CD14-positive monocyte (primary cell): ENCODE measurements at regions of chr13 and their contacts with region 1.

Region 1: GRCh38 chr13:50911937-50912795 is 2.6 kb downstream of the RNASEH2B start:
- DNase-seq: peak; percentile 62 to 80 (median 73)
- H3K4me3 ChIP-seq: peak overlapping the region in 1 of 3 experiments; percentile 92
- H3K4me3 Mint-ChIP-seq: peak overlapping the region; percentile 56 to 72
- H3K27ac ChIP-seq: peak overlapping the region in 1 of 2 donors; percentile 98
- H3K27ac Mint-ChIP-seq: peak overlapping the region; percentile 4 to 89 (median 67)
- H3K4me1 ChIP-seq: peaks cover 53 to 72% of the 10 kb centered on the region in 2 donors
- H3K4me1 Mint-ChIP-seq: peaks cover 58% of the 10 kb centered on the region
- H3K27me3 ChIP-seq: no peaks in the 10 kb centered on the region
- H3K27me3 Mint-ChIP-seq: no peaks in the 10 kb centered on the region
- CTCF ChIP-seq: peak; percentile 88

Region 2: GRCh38 chr13:49976314-49977258 is 935.6 kb before region 1 on chr13:
- intact Hi-C with region 1: loop called in 1 of 2 experiments (anchors 5 kb)
- DNase-seq: peak; percentile 54 to 74 (median 71)
- H3K4me3 ChIP-seq: no peak overlapping the region
- H3K4me3 Mint-ChIP-seq: no peak overlapping the region
- H3K27ac ChIP-seq: no peak overlapping the region
- H3K27ac Mint-ChIP-seq: peak overlapping the region in 1 of 7 donors; percentile 38
- H3K4me1 ChIP-seq: no peaks in the 10 kb centered on the region
- H3K4me1 Mint-ChIP-seq: peaks cover 11% of the 10 kb centered on the region
- H3K27me3 ChIP-seq: no peaks in the 10 kb centered on the region
- H3K27me3 Mint-ChIP-seq: peaks cover 0 to 2% (median 0%) of the 10 kb centered on the region in 3 donors
- CTCF ChIP-seq: peak; percentile 94

Region 3: GRCh38 chr13:50081679-50082425 is 830.3 kb before region 1 on chr13:
- intact Hi-C with region 1: loop called (anchors 5 to 10 kb)
- DNase-seq: peak; percentile 97 to 99 (median 97)
- H3K4me3 ChIP-seq: peak overlapping the region; percentile 79 to 94 (median 91)
- H3K4me3 Mint-ChIP-seq: peak overlapping the region; percentile 99 to 100
- H3K27ac ChIP-seq: peak overlapping the region; percentile 80 to 85
- H3K27ac Mint-ChIP-seq: peak overlapping the region; percentile 90 to 98 (median 95)
- H3K4me1 ChIP-seq: peaks cover 49 to 74% of the 10 kb centered on the region in 2 donors
- H3K4me1 Mint-ChIP-seq: peaks cover 50% of the 10 kb centered on the region
- H3K27me3 ChIP-seq: no peaks in the 10 kb centered on the region
- H3K27me3 Mint-ChIP-seq: no peaks in the 10 kb centered on the region
- CTCF ChIP-seq: no peak

Region 4: DNA sequence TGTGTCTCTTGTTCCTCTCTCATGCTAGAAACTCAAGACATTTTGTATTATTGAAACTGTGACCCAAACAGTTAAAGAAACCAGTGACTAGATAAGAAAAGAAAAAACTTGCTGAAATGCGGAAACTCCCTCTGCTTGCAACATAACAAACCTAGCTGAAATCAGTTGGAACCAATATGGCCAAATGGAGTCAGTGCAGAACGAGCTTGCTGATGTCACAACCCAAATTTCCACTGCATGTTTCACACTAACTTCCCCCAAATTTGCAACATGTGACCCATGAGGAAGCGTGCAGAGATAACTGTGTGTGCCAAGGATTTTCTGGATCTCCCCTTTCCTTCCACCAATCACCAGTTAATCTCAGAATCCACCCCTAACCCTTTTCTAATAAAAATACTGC is 276.7 kb before region 1 on chr13:
- intact Hi-C with region 1: loop called in 1 of 2 experiments (anchors 10 kb)
- DNase-seq: peak; percentile 98 to 100 (median 99)
- H3K4me3 ChIP-seq: no peak overlapping the region
- H3K4me3 Mint-ChIP-seq: peak overlapping the region in 1 of 2 donors; percentile 46
- H3K27ac ChIP-seq: peak overlapping the region; percentile 100
- H3K27ac Mint-ChIP-seq: peak overlapping the region; percentile 95 to 100 (median 99)
- H3K4me1 ChIP-seq: peaks cover 48 to 60% of the 10 kb centered on the region in 2 donors
- H3K4me1 Mint-ChIP-seq: peaks cover 49% of the 10 kb centered on the region
- H3K27me3 ChIP-seq: no peaks in the 10 kb centered on the region
- H3K27me3 Mint-ChIP-seq: no peaks in the 10 kb centered on the region
- CTCF ChIP-seq: no peak

Region 5: DNA sequence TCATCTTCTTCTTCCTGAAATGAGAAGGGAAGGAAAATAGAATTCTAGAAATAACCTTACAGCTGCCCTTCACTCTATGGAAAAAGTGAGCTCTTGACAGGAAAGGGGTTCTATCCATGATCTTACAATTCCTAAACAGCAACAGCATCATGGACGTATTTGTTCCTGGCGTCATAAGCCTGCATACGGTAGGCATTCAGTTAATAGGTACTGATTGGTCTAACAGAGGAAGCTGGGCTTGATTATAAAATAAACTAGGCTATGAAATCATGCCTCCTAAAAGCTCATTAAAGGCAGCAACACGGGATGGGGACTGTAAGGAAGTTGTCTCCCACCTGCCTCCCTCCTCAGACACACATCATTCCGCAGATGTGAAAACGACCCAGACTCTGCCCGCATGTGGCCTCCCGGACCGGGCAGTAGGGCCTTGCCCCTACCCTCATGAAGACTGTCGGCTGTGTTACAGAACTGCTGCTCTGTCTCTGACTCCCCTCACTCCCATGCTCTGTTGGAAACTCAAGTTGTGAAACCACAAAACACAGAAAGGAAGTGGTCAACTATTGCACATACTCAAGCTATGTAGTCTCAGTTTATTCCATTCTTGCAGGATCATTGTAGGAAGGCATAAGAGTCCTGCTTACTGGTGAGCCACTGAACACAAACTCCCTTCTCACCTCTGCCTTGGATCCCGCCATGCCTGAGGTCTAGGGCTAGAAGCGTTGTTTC is 198.5 kb before region 1 on chr13:
- intact Hi-C with region 1: loop called in 1 of 2 experiments (anchors 10 kb)
- DNase-seq: peak; percentile 86 to 95 (median 93)
- H3K4me3 ChIP-seq: peak overlapping the region; percentile 34 to 80 (median 77)
- H3K4me3 Mint-ChIP-seq: peak overlapping the region; percentile 82 to 89
- H3K27ac ChIP-seq: peak overlapping the region; percentile 79 to 91
- H3K27ac Mint-ChIP-seq: peak overlapping the region; percentile 94 to 99 (median 98)
- H3K4me1 ChIP-seq: peaks cover 58 to 65% of the 10 kb centered on the region in 2 donors
- H3K4me1 Mint-ChIP-seq: peaks cover 75% of the 10 kb centered on the region
- H3K27me3 ChIP-seq: no peaks in the 10 kb centered on the region
- H3K27me3 Mint-ChIP-seq: no peaks in the 10 kb centered on the region
- CTCF ChIP-seq: no peak